Colonic mucosa (tissue), 4 donors: ENCODE measurements at regions of chrX and their contacts with region 1.

Region 1: DNA sequence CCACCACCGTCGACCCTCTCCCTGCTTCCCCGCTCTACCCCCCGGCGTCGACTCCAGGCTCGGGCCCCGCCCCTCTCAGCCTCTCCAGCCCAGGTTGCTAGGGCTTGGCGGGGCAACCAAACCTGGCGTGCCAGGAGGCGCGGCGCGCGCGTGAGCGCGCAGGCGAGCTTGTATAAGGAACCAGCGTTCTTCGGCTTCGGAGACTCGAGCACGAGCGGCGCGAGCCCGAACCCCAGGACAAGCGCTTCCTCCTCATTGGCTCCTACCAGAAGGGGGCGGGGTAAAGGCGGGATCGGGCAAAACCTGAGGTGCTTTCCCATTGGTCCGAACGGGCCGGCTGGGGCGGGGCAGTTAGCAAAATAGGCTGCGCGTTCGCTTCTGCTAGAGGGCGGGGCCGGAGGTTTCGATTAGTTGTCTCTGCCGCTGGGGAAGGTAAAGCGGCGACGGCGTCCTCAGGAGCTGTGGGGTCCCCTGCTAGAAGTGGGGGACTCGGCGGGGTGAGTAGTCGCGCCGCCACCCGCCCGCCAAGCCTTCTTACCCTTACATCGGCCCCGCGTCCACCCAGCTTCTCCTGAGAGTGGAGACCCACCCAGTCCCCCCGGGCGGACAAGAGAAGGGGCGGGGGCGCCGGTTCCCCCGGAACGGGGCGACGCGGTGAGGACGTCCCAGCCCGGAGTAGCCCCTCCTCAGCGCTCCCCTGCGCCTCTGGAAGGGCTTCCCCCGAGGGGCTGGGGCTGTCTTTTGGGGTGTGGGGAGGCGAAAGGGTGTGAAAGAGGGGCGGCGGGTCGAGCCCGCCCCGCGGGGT is at the start of gene CDKL5:
- DNase-seq: peak; percentile 98
- H3K4me3 ChIP-seq: peak within 1 kb of the TSS; percentile 62
- H3K27ac ChIP-seq: peak within 1 kb of the TSS; percentile 44
- H3K4me1 ChIP-seq: no peaks in the 10 kb centered on the region
- H3K27me3 ChIP-seq: peaks cover 6% of the 10 kb centered on the region
- CTCF ChIP-seq: no peak
- total RNA-seq, gene CDKL5: 3.7 to 4.4 TPM

Region 2: DNA sequence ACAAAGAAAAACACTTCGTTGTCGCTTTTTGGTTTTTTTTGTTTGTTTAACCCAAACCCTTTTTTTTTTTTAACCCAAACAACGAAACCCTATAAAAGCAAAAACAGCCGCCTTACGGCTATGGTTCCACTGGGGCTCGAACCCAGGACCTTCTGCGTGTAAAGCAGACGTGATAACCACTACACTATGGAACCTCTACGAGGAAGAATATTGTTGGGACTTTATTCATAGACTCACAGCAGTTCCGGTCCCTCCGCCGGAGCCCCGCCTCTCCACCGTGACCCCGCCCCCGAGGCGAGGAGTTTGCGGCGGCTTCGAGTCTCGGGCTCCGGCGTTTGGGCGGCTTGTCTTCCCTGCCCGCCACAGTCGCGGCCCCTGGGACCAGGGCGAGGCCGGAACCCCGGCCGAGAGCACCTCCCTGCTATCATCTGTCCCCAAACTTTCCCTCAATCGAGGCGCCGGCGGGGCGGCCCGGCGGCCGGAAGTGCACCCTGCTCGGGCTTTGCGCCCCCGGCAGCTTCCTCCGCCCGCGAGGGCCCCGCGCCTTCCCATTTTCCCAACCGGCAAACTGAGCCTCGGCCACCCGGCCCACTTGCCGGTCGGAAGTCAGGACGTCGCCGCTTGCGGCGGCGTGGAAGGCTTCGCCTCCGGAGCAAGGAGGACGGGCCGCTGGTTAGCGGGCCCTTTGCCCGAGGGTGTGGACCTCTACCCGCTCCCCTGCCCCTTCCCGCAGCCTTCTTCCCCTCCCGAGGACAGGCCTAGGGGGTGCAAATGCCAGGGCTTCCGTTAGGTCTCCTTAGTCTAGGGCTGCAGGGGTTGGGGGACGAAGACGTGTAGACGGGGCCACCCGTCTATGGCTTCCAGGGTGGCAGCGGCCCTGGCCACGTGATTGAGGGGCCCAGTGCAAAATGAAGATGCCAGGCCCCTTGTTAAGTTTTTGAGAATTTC is 249.7 kb after region 1 on chrX:
- intact Hi-C with region 1: loop called (anchors 10 kb)
- DNase-seq: peak; percentile 80
- H3K4me3 ChIP-seq: peak overlapping the region; percentile 52
- H3K27ac ChIP-seq: peak overlapping the region; percentile 53
- H3K4me1 ChIP-seq: no peaks in the 10 kb centered on the region
- H3K27me3 ChIP-seq: no peaks in the 10 kb centered on the region
- CTCF ChIP-seq: no peak

Region 3: GRCh38 chrX:18899796-18900447 is 474.5 kb after region 1 on chrX:
- intact Hi-C with region 1: loop called (anchors 10 kb)
- DNase-seq: no peak
- H3K4me3 ChIP-seq: no peak overlapping the region
- H3K27ac ChIP-seq: no peak overlapping the region
- H3K4me1 ChIP-seq: no peaks in the 10 kb centered on the region
- H3K27me3 ChIP-seq: no peaks in the 10 kb centered on the region
- CTCF ChIP-seq: no peak